CD4-positive, alpha-beta T cell (primary cell): ENCODE measurements at regions of chr11 and their contacts with region 1.

Region 1: DNA sequence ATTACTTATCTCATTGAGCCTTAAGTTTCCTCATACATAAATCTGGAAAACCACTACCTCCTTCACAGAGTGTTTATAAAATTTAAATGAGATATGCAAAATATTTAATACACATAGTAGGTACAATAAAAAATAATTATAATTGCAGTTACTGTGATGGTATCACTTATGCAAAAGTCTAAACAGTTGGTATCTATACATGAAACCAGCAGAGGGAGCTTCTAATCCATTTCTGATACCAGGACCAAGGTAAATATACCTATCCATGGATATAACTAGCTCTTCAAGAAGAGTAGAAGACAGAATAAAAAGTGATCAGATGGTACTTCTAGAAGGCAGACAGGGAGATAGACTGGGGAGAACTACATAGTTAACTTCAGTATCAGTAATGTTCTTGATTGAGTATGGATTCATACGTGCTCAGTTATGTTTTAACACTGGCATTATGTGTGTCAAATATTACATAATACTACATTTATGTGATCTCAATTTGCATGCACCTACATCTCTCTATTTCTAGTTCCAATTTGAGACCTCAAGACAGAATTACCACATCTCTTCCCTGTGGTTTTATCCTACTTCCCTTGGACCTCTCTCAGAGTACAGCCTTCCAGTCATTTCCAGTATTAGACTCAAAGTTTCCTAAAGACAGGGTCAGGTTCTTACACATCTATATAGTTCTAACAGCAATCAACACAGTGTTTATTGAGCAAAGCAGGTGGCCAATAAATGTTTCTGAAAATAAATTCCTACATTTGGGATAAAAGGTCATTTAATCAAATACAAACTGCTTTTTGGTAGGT is 13.7 kb upstream of the TSG101 start:
- DNase-seq: peak in 3 of 14 experiments; percentile 65 to 71 (median 66)
- ATAC-seq: peak; percentile 77
- H3K4me3 ChIP-seq: no peak overlapping the region
- H3K4me3 Mint-ChIP-seq: no peak overlapping the region
- H3K27ac ChIP-seq: no peak overlapping the region
- H3K27ac Mint-ChIP-seq: peak overlapping the region; percentile 21
- H3K4me1 ChIP-seq: no peaks in the 10 kb centered on the region
- H3K4me1 Mint-ChIP-seq: no peaks in the 10 kb centered on the region
- H3K27me3 ChIP-seq: no peaks in the 10 kb centered on the region
- H3K27me3 Mint-ChIP-seq: no peaks in the 10 kb centered on the region
- CTCF ChIP-seq: peak; percentile 79

Region 2: DNA sequence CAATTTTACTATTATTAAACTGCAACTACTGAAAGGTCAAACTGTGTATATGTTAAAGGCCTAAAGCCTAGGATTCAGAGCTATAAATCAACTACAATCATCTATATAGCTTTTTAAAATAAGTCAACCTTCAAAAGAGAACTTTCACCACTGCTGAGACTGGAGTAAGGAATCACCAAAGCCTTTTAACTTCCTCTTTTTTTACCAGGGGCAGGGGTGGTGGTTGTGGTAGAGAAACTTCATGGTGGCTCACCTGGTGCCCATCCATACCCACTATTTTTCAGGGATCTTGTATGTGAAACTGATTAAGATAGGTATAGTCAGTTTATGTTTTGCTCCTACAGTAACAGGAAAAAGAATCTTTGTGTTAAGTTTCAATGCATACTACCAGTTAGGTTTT is 45.1 kb before region 1 on chr11:
- CTCF ChIA-PET with region 1: no interaction called
- POLR2A ChIA-PET with region 1: no interaction called
- intact Hi-C with region 1: no loop called
- DNase-seq: no peak
- ATAC-seq: no peak
- H3K4me3 ChIP-seq: no peak overlapping the region
- H3K4me3 Mint-ChIP-seq: no peak overlapping the region
- H3K27ac ChIP-seq: no peak overlapping the region
- H3K27ac Mint-ChIP-seq: peak overlapping the region; percentile 59
- H3K4me1 ChIP-seq: no peaks in the 10 kb centered on the region
- H3K4me1 Mint-ChIP-seq: peaks cover 21% of the 10 kb centered on the region
- H3K27me3 ChIP-seq: no peaks in the 10 kb centered on the region
- H3K27me3 Mint-ChIP-seq: no peaks in the 10 kb centered on the region
- CTCF ChIP-seq: no peak

Region 3: DNA sequence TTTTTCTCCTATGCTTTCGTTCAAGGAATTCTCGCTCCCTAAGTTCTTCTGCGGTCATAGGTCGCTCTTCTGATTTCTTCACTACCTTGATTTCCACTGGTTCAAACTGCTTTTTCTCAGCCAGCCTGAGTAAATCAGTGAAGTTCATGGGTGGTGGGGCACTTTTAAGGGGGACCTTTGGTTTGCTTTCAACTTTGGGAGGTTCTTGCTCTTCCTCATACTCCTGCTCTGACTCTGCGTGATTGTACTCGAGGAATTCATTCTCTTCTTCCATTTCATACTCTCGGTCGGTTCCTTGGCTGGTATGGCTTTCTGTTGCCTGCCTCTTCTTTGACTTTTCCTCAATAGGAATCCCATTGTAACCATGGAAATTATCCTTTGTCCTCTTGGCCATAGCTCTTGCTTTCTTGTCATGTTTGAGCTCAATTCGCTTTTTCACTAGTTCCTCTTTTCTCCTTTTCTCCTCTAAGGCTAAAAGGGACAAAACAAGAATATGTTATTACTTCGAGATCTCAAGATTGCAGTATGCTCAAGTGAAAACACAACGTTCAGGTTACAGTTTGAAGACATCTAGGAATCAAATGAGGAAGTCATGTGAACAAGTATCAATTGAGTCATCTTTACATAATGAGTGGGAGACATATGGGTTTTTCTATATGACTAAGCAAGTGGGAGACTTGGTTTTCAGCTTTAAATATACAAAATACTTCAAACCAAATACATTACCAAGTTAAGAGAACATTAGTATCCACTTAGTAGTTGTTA is 75.4 kb after region 1 on chr11:
- CTCF ChIA-PET with region 1: interaction called, 11 read pairs
- POLR2A ChIA-PET with region 1: interaction called, 5 read pairs
- intact Hi-C with region 1: no loop called
- DNase-seq: peak in 3 of 14 experiments; percentile 17 to 41 (median 36)
- ATAC-seq: no peak
- H3K4me3 ChIP-seq: no peak overlapping the region
- H3K4me3 Mint-ChIP-seq: no peak overlapping the region
- H3K27ac ChIP-seq: no peak overlapping the region
- H3K27ac Mint-ChIP-seq: no peak overlapping the region
- H3K4me1 ChIP-seq: peaks cover 31% of the 10 kb centered on the region
- H3K4me1 Mint-ChIP-seq: peaks cover 52% of the 10 kb centered on the region
- H3K27me3 ChIP-seq: no peaks in the 10 kb centered on the region
- H3K27me3 Mint-ChIP-seq: no peaks in the 10 kb centered on the region
- CTCF ChIP-seq: no peak

Region 4: DNA sequence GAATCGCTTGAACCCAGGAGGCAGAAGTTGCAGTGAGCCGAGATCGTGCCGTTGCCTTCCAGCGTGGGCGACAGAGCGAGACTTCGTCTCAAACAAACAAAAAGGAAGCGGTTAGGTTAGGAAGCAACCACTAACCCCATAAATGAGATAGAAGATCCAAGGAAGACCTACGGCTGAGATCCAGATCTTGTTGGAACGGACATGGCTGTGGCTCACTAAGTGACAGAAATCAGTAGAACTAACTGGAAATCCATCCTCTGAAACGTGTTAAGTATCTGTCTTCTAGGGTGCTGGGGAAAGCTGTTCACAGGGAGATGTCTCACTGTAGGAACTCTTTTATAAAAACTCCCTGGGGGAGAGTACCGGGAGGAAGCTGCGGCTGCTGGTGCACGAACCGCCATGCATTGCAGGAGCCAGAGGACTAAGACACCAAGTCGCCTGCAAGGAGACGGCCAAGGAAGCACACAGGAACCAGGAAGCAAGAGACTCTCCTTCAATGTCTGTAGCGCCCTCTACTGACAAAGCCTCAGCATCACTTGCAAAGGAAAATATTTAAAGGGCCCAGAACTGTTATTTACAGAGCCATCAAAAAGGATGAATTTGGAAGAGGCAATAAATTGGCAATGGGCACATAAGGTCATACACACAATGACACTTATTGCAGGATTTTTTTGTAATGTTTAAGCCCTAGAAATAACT is 110.6 kb after region 1 on chr11:
- CTCF ChIA-PET with region 1: interaction called, 3 read pairs
- POLR2A ChIA-PET with region 1: no interaction called
- intact Hi-C with region 1: loop called (anchors 2 to 5 kb)
- DNase-seq: peak in 6 of 14 experiments; percentile 20 to 82 (median 58)
- ATAC-seq: peak; percentile 29
- H3K4me3 ChIP-seq: no peak overlapping the region
- H3K4me3 Mint-ChIP-seq: no peak overlapping the region
- H3K27ac ChIP-seq: no peak overlapping the region
- H3K27ac Mint-ChIP-seq: no peak overlapping the region
- H3K4me1 ChIP-seq: peaks cover 4% of the 10 kb centered on the region
- H3K4me1 Mint-ChIP-seq: peaks cover 4% of the 10 kb centered on the region
- H3K27me3 ChIP-seq: no peaks in the 10 kb centered on the region
- H3K27me3 Mint-ChIP-seq: no peaks in the 10 kb centered on the region
- CTCF ChIP-seq: no peak

Region 5: DNA sequence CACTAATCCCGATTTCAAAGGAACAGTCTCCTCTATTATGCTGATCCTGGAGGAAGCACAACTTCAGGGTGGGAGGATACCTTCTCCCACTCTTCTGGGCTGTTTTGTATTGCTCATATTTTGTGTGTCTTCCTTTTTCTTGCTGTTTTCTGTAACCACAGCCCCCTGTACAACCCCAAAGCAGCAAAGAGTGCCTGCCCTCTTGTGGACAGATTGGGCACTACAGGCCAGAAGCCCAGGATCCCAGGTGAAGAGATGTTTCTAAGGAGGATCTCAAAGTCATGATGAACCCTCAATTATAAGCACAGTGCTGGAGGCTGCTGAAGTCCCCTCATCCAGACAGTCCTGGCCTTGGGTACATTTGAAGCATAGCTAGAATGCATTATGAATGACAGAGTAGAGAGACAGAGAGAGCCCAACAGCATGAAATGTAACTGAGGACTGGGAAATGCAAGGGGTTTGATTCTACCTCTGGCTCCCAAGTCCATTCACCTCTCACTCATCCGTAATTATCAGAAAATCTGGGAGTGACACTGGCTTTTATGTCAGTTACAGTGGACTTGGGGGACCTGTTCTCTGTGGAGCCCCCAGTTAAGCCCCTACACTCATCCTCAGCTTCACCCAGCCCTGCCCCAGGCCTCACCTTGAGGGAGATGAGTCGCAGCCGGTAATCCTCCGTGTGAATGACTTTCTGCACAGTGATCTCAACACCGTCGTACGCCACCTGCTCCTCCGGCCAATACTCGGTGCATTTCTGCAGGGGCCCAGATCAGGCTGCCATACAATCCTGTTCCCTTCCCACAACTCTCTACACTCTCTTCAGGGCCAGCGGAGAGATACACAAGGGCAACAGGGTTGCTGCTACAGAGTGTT is 191.8 kb after region 1 on chr11:
- CTCF ChIA-PET with region 1: interaction called, 15 read pairs
- POLR2A ChIA-PET with region 1: interaction called, 4 read pairs
- intact Hi-C with region 1: loop called (anchors 1 kb)
- DNase-seq: peak; percentile 40 to 82 (median 67)
- ATAC-seq: peak; percentile 80
- H3K4me3 ChIP-seq: no peak overlapping the region
- H3K4me3 Mint-ChIP-seq: no peak overlapping the region
- H3K27ac ChIP-seq: no peak overlapping the region
- H3K27ac Mint-ChIP-seq: no peak overlapping the region
- H3K4me1 ChIP-seq: peaks cover 17% of the 10 kb centered on the region
- H3K4me1 Mint-ChIP-seq: peaks cover 10% of the 10 kb centered on the region
- H3K27me3 ChIP-seq: no peaks in the 10 kb centered on the region
- H3K27me3 Mint-ChIP-seq: no peaks in the 10 kb centered on the region
- CTCF ChIP-seq: peak; percentile 97

Region 6: DNA sequence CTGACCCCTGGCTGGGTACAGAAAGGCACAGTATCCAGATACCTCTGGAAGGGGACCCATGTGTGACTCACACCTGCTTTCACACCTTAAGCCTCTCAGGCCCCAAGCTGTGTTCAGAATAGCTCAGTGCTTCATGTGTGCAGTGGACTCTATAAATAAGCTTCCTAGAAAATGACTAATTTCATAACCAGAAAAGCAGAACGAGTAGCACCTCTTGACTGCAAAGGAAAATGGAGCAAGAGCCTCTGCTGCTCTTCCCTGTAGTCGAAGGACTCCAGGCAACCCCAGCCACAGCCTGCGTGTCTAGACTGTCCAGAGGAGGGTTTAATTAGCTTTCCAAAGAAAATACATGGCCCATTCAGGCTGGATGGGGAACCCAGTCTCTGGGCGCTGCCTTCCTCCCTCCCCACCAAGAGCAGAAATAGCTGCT is 228.1 kb after region 1 on chr11:
- CTCF ChIA-PET with region 1: interaction called, 8 read pairs
- POLR2A ChIA-PET with region 1: interaction called, 3 read pairs
- intact Hi-C with region 1: loop called (anchors 1 kb)
- DNase-seq: no peak
- ATAC-seq: no peak
- H3K4me3 ChIP-seq: no peak overlapping the region
- H3K4me3 Mint-ChIP-seq: no peak overlapping the region
- H3K27ac ChIP-seq: no peak overlapping the region
- H3K27ac Mint-ChIP-seq: no peak overlapping the region
- H3K4me1 ChIP-seq: no peaks in the 10 kb centered on the region
- H3K4me1 Mint-ChIP-seq: no peaks in the 10 kb centered on the region
- H3K27me3 ChIP-seq: peaks cover 0 to 3% of the 10 kb centered on the region in 2 experiments
- H3K27me3 Mint-ChIP-seq: peaks cover 18% of the 10 kb centered on the region
- CTCF ChIP-seq: no peak